Activated CD4-positive, alpha-beta T cell treated with anti-CD3 and anti-CD28 coated beads for 36 hours (primary cell): ENCODE measurements at regions of chr1 and their contacts with region 1.

Region 1: GRCh38 chr1:153633716-153634665 is at the start of gene CHTOP:
- DNase-seq: peak; percentile 98
- ATAC-seq: peak; percentile 93
- H3K4me3 Mint-ChIP-seq: peak within 1 kb of the TSS; percentile 98
- H3K27ac Mint-ChIP-seq: peak within 1 kb of the TSS; percentile 98
- H3K4me1 Mint-ChIP-seq: peaks cover 50% of the 10 kb centered on the region
- H3K27me3 Mint-ChIP-seq: no peaks in the 10 kb centered on the region
- total RNA-seq, gene CHTOP: 85.1 to 91.4 TPM

Region 2: DNA sequence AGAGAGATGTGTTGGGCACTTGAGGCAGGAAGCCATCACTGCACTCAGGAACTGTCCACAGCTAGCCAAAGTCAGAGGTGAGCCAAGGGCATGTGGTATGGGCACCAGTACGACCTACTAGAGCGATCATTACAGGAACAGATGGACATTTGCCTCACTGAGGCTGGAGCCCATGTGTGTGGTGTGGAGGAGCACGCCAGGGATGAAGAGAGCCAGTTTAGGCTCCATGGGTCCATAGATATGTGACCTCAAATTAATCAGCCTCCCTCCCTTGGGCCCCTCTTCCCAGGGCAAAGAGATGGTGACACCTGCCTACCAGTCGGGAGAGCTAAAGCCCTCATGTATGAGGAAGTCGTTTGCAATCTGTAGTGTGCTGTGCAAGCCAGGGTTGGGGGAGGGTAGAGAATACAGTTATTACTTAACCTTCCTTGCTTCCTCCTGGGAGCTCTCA is 289.4 kb before region 1 on chr1:
- CTCF ChIA-PET with region 1: no interaction called
- POLR2A ChIA-PET with region 1: no interaction called
- intact Hi-C with region 1: no loop called
- DNase-seq: no peak
- ATAC-seq: no peak
- H3K4me3 Mint-ChIP-seq: no peak overlapping the region
- H3K27ac Mint-ChIP-seq: no peak overlapping the region
- H3K4me1 Mint-ChIP-seq: peaks cover 40% of the 10 kb centered on the region
- H3K27me3 Mint-ChIP-seq: peaks cover 9% of the 10 kb centered on the region

Region 3: GRCh38 chr1:153510984-153511410 is 123.0 kb before region 1 on chr1:
- CTCF ChIA-PET with region 1: interaction called, 6 read pairs
- POLR2A ChIA-PET with region 1: no interaction called
- intact Hi-C with region 1: loop called (anchors 5 kb)
- DNase-seq: peak; percentile 90
- ATAC-seq: peak; percentile 95
- H3K4me3 Mint-ChIP-seq: no peak overlapping the region
- H3K27ac Mint-ChIP-seq: peak overlapping the region; percentile 74
- H3K4me1 Mint-ChIP-seq: peaks cover 10% of the 10 kb centered on the region
- H3K27me3 Mint-ChIP-seq: no peaks in the 10 kb centered on the region

Region 4: DNA sequence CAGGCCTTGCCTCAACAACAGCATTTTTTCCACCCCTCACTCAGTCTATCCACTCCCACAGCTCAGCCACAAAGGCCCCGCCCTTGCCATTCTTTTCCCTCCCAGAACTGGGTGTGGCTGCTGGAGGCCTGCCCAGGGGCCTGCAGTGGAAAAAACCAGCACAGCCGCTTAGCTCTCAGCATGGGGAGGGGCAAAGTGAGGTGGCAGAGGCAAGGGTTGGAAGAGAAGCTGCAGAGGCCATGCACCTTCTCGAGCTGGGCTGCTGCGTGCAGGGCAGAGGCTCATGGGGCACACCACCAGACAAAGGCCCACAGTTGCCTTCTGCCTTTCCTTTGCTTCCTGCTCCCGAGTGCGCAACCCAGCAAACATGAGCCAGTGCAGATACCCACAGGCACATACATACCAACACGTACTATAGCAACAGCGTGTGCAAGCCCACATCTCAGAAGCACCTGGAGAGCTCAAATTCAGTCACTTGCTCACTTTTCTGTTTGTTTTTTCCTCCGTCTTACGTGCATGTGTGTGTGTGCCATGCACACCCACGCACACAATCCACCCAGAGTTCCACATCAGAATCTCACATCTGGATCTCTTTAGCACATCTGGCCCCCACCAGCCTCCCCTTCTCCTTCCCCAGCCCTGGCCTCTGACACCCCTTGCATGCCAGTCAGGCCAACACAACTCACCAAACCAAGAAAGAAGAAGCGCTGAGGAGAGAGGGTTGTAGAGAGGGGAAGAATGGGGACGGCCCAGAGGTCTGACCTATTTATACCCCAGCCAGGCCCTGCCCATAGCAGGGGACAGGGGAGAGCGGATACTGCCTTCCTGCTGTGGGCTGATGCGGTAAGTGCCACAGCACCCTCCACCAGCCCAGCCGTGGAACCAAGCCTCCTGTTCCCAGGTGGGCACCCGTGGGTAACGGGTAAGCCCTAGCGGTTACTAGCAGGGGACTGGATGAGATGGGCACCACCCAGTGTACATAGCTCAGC is 88.6 kb before region 1 on chr1 and contains the start of gene S100A4:
- CTCF ChIA-PET with region 1: interaction called, 3 read pairs
- POLR2A ChIA-PET with region 1: interaction called, 11 read pairs
- intact Hi-C with region 1: loop called in 1 of 2 experiments (anchors 1 kb)
- DNase-seq: peak; percentile 97
- ATAC-seq: peak; percentile 83
- H3K4me3 Mint-ChIP-seq: peak within 1 kb of the TSS; percentile 78
- H3K27ac Mint-ChIP-seq: peak within 1 kb of the TSS; percentile 96
- H3K4me1 Mint-ChIP-seq: peaks cover 70% of the 10 kb centered on the region
- H3K27me3 Mint-ChIP-seq: no peaks in the 10 kb centered on the region
- total RNA-seq, gene S100A4: 84.8 to 166 TPM

Region 5: DNA sequence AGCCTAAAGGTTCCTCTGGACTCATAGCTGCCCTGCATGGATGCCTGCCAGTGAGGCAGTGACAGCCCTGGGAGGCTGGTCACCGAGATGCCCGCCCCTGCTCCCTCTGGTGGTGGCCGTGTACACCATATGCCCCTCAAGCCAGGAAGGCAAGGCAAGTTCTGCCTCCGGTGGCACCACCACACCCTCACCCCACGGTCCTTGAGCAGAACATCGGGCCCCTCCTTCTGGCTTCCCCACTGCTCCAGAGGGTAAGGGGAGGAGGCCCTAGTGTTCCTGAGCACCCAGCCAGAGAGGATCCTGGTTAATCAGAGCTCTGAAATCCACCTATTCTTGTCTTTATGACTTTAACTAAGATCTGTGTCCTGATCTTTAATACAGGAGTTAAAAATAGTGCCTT is 16.3 kb before region 1 on chr1:
- CTCF ChIA-PET with region 1: interaction called, 60 read pairs
- POLR2A ChIA-PET with region 1: interaction called, 3 read pairs
- intact Hi-C with region 1: loop called in 1 of 2 experiments (anchors 1 kb)
- DNase-seq: peak; percentile 90
- ATAC-seq: peak; percentile 99
- H3K4me3 Mint-ChIP-seq: no peak overlapping the region
- H3K27ac Mint-ChIP-seq: peak overlapping the region; percentile 58
- H3K4me1 Mint-ChIP-seq: peaks cover 20% of the 10 kb centered on the region
- H3K27me3 Mint-ChIP-seq: no peaks in the 10 kb centered on the region

Region 6: GRCh38 chr1:153727463-153728304 is 93.7 kb after region 1 on chr1 and contains the start of gene INTS3:
- CTCF ChIA-PET with region 1: no interaction called
- POLR2A ChIA-PET with region 1: no interaction called
- intact Hi-C with region 1: loop called (anchors 1 to 5 kb)
- DNase-seq: peak; percentile 99
- ATAC-seq: peak; percentile 99
- H3K4me3 Mint-ChIP-seq: peak within 1 kb of the TSS; percentile 93
- H3K27ac Mint-ChIP-seq: peak within 1 kb of the TSS; percentile 95
- H3K4me1 Mint-ChIP-seq: peaks cover 44% of the 10 kb centered on the region
- H3K27me3 Mint-ChIP-seq: no peaks in the 10 kb centered on the region
- total RNA-seq, gene INTS3: 52.0 to 58.0 TPM

Region 7: DNA sequence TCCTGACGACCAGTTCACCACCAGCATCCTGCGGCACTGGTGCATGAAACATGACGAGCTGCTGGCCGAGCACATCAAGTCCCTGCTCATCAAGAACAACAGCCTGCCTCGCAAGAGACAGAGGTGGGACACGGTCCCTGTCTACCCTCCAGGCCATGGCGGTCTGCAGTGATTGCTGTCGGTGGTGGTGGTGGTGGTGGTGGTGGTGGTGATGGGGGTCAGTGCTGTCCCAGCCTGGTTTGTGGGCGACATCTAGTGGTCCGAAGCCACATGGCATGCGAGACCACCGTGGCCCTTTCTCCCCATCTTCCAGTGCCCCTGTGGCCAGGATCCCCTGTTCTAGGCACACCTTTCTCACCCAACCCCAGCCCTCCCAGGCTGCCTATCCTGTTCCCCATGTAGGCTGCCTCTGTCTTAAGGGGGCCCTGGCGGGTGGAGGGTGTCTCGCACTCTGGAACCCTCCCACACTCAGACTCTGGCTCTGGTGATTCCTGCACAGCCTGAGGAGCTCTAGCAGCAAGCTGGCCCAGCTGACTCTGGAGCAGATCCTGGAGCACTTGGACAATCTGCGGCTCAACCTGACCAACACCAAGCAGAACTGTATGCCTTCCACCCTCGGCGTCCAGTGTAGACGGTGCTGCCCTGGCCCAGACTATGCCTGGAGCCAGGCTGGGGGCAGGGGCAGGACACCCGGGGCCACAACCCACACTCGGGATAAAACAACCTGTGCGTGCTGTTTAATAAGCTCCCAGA is 138.0 kb after region 1 on chr1:
- CTCF ChIA-PET with region 1: no interaction called
- POLR2A ChIA-PET with region 1: no interaction called
- intact Hi-C with region 1: no loop called
- DNase-seq: no peak
- ATAC-seq: no peak
- H3K4me3 Mint-ChIP-seq: no peak overlapping the region
- H3K27ac Mint-ChIP-seq: no peak overlapping the region
- H3K4me1 Mint-ChIP-seq: peaks cover 14% of the 10 kb centered on the region
- H3K27me3 Mint-ChIP-seq: no peaks in the 10 kb centered on the region

Region 8: DNA sequence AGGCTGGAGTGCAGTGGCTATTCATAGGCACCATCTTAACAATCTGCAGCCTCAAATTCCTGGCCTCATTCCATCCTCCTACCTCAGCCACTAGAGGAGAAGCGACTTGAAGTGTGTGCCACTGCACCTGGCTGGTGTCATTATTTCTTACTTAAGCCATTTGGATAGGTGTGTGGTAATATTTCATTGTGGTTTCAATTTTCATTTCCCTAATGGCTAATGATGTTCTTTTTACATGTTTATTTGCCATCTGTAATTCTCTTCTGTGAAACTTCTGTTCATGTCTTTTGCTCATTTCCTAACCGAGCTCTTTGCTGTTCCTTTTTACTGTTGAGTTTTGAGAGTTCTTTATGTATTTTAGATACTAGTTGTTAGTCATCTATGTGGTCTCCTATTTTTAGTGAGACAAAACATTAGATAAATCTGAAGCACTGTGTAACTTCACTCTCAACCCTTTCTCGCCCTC is 208.0 kb after region 1 on chr1:
- CTCF ChIA-PET with region 1: no interaction called
- POLR2A ChIA-PET with region 1: no interaction called
- intact Hi-C with region 1: no loop called
- DNase-seq: no peak
- ATAC-seq: peak; percentile 49
- H3K4me3 Mint-ChIP-seq: no peak overlapping the region
- H3K27ac Mint-ChIP-seq: peak overlapping the region; percentile 56
- H3K4me1 Mint-ChIP-seq: peaks cover 25% of the 10 kb centered on the region
- H3K27me3 Mint-ChIP-seq: no peaks in the 10 kb centered on the region

Region 9: DNA sequence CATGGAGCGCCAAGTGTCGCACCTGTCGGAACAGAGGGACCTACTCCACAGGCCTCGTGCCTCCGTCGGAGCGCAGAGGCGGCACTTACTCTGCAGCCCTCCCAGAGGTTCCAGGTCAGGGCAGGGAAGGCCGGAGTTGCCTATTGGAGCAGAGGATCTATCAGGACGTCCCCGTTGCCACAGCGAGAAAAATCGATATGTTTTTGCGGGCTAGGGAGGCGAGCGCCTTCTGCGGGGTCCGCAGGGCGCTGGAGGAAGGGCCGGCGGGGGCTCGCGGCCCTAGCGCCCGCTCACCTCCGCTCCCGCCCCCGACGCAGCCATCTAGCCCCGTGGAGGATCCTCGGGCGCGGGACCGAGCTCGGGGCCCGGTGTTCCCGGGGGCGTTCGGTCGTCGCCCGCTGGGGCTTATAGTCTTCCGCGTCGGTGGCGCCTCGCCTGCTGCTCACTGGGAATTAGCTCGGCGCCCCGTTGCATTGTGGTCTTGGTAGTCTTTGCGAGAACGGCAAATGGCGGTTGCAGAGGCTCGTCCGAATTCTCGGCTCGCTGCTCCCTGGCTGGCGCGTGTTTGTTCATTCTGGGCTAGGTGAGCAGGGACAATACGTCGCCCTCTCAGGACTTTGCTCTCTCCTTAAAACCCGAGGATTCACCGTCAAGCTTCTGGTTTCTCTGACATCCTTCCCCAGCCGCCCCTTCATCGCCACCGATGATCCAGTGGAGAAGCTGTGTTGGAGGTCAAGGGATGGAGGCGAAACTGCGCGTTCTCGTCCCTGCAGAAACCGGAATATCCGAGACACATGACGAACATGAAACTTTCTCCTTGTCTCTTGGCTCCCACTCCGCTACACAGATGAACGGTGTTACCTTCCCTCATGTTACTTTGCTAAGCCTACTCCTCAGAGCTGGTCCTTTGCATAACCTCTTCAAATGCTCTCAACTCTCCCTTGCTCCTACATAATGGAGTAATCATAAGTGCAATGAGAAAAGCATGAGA is 343.6 kb after region 1 on chr1 and contains the start of gene JTB:
- CTCF ChIA-PET with region 1: no interaction called
- POLR2A ChIA-PET with region 1: no interaction called
- intact Hi-C with region 1: loop called in 1 of 2 experiments (anchors 1 kb)
- DNase-seq: peak; percentile 94
- ATAC-seq: peak; percentile 95
- H3K4me3 Mint-ChIP-seq: peak within 1 kb of the TSS; percentile 97
- H3K27ac Mint-ChIP-seq: peak within 1 kb of the TSS; percentile 97
- H3K4me1 Mint-ChIP-seq: peaks cover 33% of the 10 kb centered on the region
- H3K27me3 Mint-ChIP-seq: no peaks in the 10 kb centered on the region
- total RNA-seq, gene JTB: 107 to 145 TPM